HEK293 (cell line): ENCODE measurements at regions of chr20 and their contacts with region 1.

Region 1: GRCh38 chr20:40962730-40963504 is 65.7 kb upstream of the TOP1 start:
- H3K4me3 ChIP-seq: no peak overlapping the region
- H3K27ac ChIP-seq: no peak overlapping the region
- H3K4me1 ChIP-seq: no peaks in the 10 kb centered on the region
- CTCF ChIP-seq: peak; percentile 82

Region 2: GRCh38 chr20:40797425-40797824 is 165.5 kb before region 1 on chr20:
- CTCF ChIA-PET with region 1: interaction called, 17 read pairs
- POLR2A ChIA-PET with region 1: no interaction called
- H3K4me3 ChIP-seq: no peak overlapping the region
- H3K27ac ChIP-seq: no peak overlapping the region
- H3K4me1 ChIP-seq: no peaks in the 10 kb centered on the region
- CTCF ChIP-seq: no peak

Region 3: GRCh38 chr20:40980106-40980827 is 17.4 kb after region 1 on chr20:
- CTCF ChIA-PET with region 1: interaction called, 10 read pairs
- POLR2A ChIA-PET with region 1: no interaction called
- H3K4me3 ChIP-seq: no peak overlapping the region
- H3K27ac ChIP-seq: no peak overlapping the region
- H3K4me1 ChIP-seq: no peaks in the 10 kb centered on the region
- CTCF ChIP-seq: no peak

Region 4: GRCh38 chr20:41095110-41095969 is 132.4 kb after region 1 on chr20:
- CTCF ChIA-PET with region 1: interaction called, 117 read pairs
- POLR2A ChIA-PET with region 1: no interaction called
- H3K4me3 ChIP-seq: no peak overlapping the region
- H3K27ac ChIP-seq: no peak overlapping the region
- H3K4me1 ChIP-seq: no peaks in the 10 kb centered on the region
- CTCF ChIP-seq: peak; percentile 50